ENCODE measurements at regions of chr11 and their contacts with region 1.

Region 1: GRCh38 chr11:73779084-73779902 is 8.4 kb upstream of the MRPL48 start:
- DNase-seq: peak; percentile 100
- ATAC-seq: peak; percentile 97
- H3K4me3 Mint-ChIP-seq: peak overlapping the region; percentile 80
- H3K27ac Mint-ChIP-seq: peak overlapping the region; percentile 98
- H3K4me1 Mint-ChIP-seq: peaks cover 10% of the 10 kb centered on the region
- H3K27me3 Mint-ChIP-seq: no peaks in the 10 kb centered on the region

Region 2: DNA sequence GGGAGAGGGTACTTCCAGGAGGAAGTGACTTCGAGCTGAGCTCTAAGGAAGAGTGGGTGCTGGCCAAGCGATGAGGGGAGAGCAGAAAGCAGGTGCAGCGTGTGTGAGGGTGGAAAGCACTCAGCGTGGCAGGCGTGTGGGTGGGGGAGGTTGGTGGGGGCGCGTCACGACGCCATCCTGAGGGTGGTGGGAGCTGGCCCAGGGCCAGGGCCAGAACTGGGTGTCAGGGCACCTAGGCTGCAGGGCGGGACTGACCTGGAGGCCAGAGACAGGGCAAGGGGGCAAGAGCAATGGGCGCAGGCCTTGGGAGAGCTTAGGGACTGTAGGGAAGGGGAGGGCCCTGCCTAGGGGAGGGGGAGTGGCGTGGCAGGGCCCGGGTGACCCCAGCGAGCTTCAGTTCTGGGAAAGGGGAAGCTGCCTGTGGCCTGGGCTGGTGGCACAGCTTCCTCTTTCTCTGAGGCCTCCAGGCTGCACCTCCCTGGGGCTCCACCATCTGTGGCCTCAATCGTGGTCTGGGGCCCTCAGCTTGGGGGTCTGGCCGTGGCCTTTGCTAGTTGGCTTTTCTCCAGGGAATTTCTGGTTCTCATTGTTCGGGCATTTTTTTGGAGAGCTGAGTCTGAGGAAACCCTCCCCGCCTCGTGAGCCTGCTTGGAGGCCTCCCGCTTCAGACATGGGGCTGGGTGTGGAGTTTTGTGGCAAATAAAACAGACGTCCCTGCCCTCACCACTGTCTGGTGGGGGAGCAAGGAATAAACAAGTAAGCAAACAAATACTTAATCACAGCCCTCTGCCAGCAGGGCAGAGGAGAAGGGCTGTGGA is 394.2 kb before region 1 on chr11:
- CTCF ChIA-PET with region 1: no interaction called
- POLR2A ChIA-PET with region 1: no interaction called
- intact Hi-C with region 1: no loop called
- DNase-seq: peak; percentile 56
- ATAC-seq: peak; percentile 76
- H3K4me3 Mint-ChIP-seq: no peak overlapping the region
- H3K27ac Mint-ChIP-seq: peak overlapping the region; percentile 65
- H3K4me1 Mint-ChIP-seq: peaks cover 52% of the 10 kb centered on the region
- H3K27me3 Mint-ChIP-seq: no peaks in the 10 kb centered on the region

Region 3: DNA sequence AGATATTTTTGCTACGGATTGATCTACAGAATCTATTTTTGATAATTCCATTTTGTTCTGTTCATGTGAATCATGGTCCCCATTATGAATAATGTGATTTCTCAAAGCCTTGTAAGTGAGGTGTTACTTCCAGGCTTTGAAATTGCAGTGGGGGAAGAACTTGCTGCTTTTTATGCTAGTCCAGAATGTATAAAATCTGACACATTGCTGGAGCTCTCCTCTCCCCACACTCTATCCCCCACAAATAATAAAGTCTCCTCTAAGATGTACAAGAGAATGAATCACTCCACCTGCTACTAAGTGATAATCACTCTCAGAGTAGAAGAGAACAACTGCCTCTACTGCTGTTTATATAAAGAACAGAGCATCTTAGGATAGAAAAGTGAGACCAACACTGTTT is 12.5 kb before region 1 on chr11:
- CTCF ChIA-PET with region 1: interaction called, 53 read pairs
- POLR2A ChIA-PET with region 1: interaction called, 40 read pairs
- intact Hi-C with region 1: loop called (anchors 1 kb)
- DNase-seq: no peak
- ATAC-seq: peak; percentile 36
- H3K4me3 Mint-ChIP-seq: no peak overlapping the region
- H3K27ac Mint-ChIP-seq: no peak overlapping the region
- H3K4me1 Mint-ChIP-seq: no peaks in the 10 kb centered on the region
- H3K27me3 Mint-ChIP-seq: peaks cover 3% of the 10 kb centered on the region

Measured in activated CD4-positive, alpha-beta T cell treated with anti-CD3 and anti-CD28 coated beads for 36 hours (primary cell).